GM12878 (cell line): ENCODE measurements at regions of chr15 and their contacts with region 1.

Region 1: GRCh38 chr15:52256366-52256765 is 39.2 kb downstream of the MYO5C start:
- DNase-seq: peak; percentile 76
- ATAC-seq: peak; percentile 71
- H3K4me3 ChIP-seq: no peak overlapping the region
- H3K27ac ChIP-seq: no peak overlapping the region
- H3K4me1 ChIP-seq: peaks cover 12% of the 10 kb centered on the region
- H3K27me3 ChIP-seq: no peaks in the 10 kb centered on the region
- CTCF ChIP-seq: peak; percentile 68 to 82 (median 71)
- EP300 ChIP-seq: no peak
- POLR2A ChIP-seq: no peak
- RAD21 ChIP-seq: peak; percentile 88

Region 2: DNA sequence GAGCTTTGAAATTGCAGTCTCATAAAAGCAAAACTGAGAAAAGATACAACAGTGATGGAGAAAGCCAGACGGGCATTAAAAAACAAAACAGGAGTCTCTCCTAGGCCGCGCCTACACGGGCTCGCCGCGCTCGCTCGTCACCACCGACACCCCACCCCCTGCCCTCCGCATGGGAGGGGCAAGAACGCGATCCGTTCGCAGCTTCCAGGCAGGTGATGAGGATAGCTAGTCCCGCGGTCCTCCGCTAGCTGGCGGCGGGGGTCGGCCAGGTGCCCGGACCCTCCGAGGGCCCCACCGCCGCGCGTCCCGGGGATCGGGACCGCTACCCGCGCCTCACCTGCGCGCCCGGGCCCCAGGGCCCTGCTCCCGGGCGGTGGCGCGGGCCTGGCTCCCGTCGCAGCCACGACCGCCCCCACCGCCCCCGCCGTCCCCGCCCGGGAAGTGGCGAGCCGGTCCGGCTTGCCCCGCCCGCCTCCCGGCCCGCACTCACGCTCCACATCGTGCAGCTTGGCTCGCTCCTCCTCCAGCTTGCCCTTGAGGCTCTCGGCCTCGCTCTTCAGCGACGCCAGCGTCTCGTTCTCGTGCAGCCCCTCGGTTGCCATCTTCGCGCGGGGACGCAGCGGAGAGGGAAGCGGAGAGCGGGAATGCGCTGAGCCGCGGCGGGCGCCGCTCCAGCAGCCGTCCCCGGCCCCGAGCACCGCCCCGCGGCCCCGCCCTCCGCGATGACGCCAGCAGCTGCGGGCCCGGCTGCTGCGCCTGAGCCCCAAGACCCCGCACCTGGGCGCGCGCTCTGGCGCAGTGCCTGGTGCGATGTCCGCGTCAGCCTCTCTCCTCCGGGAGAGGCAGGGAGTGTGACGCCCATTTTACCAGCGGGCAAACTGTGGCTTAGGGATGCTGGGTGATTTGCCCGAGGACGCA is 76.8 kb before region 1 on chr15:
- CTCF ChIA-PET with region 1: interaction called, 6 read pairs
- POLR2A ChIA-PET with region 1: no interaction called
- RAD21 ChIA-PET with region 1: interaction called, 18 read pairs
- SMC1A ChIA-PET with region 1: interaction called, 8 read pairs
- in situ Hi-C with region 1: no loop called
- intact Hi-C with region 1: no loop called
- DNase-seq: peak; percentile 37
- ATAC-seq: peak; percentile 87
- H3K4me3 ChIP-seq: peak overlapping the region; percentile 92
- H3K27ac ChIP-seq: peak overlapping the region; percentile 76
- H3K4me1 ChIP-seq: peaks cover 12% of the 10 kb centered on the region
- H3K27me3 ChIP-seq: no peaks in the 10 kb centered on the region
- CTCF ChIP-seq: no peak
- EP300 ChIP-seq: no peak
- POLR2A ChIP-seq: peak; percentile 89
- RAD21 ChIP-seq: no peak

Region 3: GRCh38 chr15:52227456-52227855 is 28.9 kb before region 1 on chr15:
- CTCF ChIA-PET with region 1: interaction called, 11 read pairs
- POLR2A ChIA-PET with region 1: no interaction called
- RAD21 ChIA-PET with region 1: interaction called, 11 read pairs
- SMC1A ChIA-PET with region 1: interaction called, 20 read pairs
- in situ Hi-C with region 1: no loop called
- intact Hi-C with region 1: no loop called
- DNase-seq: peak; percentile 66
- ATAC-seq: peak; percentile 90
- H3K4me3 ChIP-seq: no peak overlapping the region
- H3K27ac ChIP-seq: no peak overlapping the region
- H3K4me1 ChIP-seq: peaks cover 36% of the 10 kb centered on the region
- H3K27me3 ChIP-seq: no peaks in the 10 kb centered on the region
- CTCF ChIP-seq: peak; percentile 79 to 87 (median 81)
- EP300 ChIP-seq: no peak
- POLR2A ChIP-seq: no peak
- RAD21 ChIP-seq: peak; percentile 79

Region 4: DNA sequence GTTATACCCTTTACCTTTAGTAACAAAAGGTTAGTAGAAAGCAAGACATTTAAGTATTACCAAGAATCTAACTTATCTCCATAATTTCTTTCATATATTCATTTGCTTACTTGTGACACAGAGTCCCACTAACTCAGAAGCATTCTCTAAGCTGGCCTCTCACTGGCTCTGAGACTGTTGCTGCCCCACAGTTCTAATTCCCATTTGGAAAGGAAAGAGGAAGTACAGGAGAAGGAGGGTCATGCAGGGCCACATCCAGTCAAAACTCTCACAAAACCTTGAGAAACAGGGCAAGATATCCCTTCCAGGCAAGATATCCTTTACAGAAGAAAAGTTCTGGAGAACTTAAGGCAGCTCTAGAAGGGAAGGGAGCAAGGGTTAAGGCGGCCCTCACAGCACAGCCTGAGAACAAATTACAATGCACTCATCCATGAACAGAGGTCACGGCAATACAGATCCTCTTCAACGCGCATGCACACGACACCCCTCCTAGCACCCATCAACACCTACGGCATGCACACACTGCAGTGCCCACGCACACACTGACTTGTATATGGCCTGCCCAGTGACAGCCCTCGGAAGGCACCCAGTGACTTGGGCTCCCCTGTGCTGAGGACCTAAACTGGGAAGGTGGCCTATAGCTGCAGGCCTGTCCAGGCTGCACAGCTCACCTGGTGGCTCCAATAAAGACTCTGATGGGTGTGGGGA is 52.2 kb after region 1 on chr15:
- CTCF ChIA-PET with region 1: interaction called, 13 read pairs
- POLR2A ChIA-PET with region 1: no interaction called
- RAD21 ChIA-PET with region 1: interaction called, 3 read pairs
- SMC1A ChIA-PET with region 1: interaction called, 20 read pairs
- in situ Hi-C with region 1: no loop called
- intact Hi-C with region 1: loop called (anchors 5 kb)
- DNase-seq: no peak
- ATAC-seq: peak; percentile 83
- H3K4me3 ChIP-seq: no peak overlapping the region
- H3K27ac ChIP-seq: peak overlapping the region; percentile 83
- H3K4me1 ChIP-seq: peaks cover 15% of the 10 kb centered on the region
- H3K27me3 ChIP-seq: no peaks in the 10 kb centered on the region
- CTCF ChIP-seq: no peak
- EP300 ChIP-seq: no peak
- POLR2A ChIP-seq: no peak
- RAD21 ChIP-seq: no peak

Region 5: DNA sequence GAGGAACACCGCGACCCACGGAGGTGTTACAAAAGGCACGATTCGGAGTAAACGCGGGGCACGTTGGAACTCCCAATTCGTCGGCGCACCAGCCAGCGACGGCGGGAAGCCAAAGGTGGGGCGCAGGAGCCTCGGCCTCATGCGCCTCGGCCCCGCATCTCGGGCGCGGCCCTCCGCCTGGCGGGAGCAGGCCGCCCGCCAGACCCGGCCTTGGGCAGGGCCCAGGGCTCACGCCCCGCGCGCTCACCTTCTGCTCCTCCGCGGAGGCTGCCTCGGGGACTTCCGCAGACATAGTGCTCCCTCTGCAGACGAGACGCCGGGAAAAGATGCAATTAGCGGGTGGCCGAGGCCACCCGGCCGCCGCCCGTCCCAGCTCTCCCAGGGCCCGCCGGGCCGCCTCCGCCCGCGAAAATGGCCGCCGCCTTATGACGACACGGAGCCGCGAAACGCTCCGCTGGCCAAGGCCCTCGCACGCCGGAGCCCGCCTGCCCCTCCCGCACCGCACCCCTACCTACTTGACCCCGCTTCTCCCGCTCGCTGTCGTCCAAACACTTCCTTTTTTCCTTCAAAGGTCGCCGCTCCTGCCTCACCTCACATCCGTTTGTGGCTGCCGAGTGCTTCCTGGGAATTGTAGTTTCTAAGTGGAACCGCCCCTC is 312.4 kb after region 1 on chr15 and contains the start of gene ARPP19:
- CTCF ChIA-PET with region 1: interaction called, 5 read pairs
- POLR2A ChIA-PET with region 1: no interaction called
- RAD21 ChIA-PET with region 1: interaction called, 7 read pairs
- SMC1A ChIA-PET with region 1: interaction called, 10 read pairs
- in situ Hi-C with region 1: no loop called
- intact Hi-C with region 1: loop called (anchors 5 kb)
- DNase-seq: peak; percentile 69
- ATAC-seq: peak; percentile 81
- H3K4me3 ChIP-seq: peak within 1 kb of the TSS; percentile 72
- H3K27ac ChIP-seq: peak within 1 kb of the TSS; percentile 93
- H3K4me1 ChIP-seq: peaks cover 7% of the 10 kb centered on the region
- H3K27me3 ChIP-seq: no peaks in the 10 kb centered on the region
- CTCF ChIP-seq: peak in 1 of 3 experiments; percentile 39; a peak in 2 of 6 replicates
- EP300 ChIP-seq: no peak
- POLR2A ChIP-seq: peak; percentile 81
- RAD21 ChIP-seq: peak; percentile 34
- polyA plus RNA-seq, gene ARPP19: 77.2 to 114 TPM

Region 6: GRCh38 chr15:52735231-52736089 is 479.1 kb after region 1 on chr15:
- CTCF ChIA-PET with region 1: interaction called, 191 read pairs
- POLR2A ChIA-PET with region 1: no interaction called
- RAD21 ChIA-PET with region 1: interaction called, 121 read pairs
- SMC1A ChIA-PET with region 1: interaction called, 143 read pairs
- in situ Hi-C with region 1: loop called (anchors 5 kb)
- intact Hi-C with region 1: loop called (anchors 1 kb)
- DNase-seq: peak; percentile 64
- ATAC-seq: peak; percentile 96
- H3K4me3 ChIP-seq: no peak overlapping the region
- H3K27ac ChIP-seq: no peak overlapping the region
- H3K4me1 ChIP-seq: no peaks in the 10 kb centered on the region
- H3K27me3 ChIP-seq: no peaks in the 10 kb centered on the region
- CTCF ChIP-seq: peak; percentile 58 to 88 (median 72)
- EP300 ChIP-seq: no peak
- POLR2A ChIP-seq: no peak
- RAD21 ChIP-seq: peak; percentile 98